Panc1 (cell line): ENCODE measurements at regions of chr1 and their contacts with region 1.

Region 1: DNA sequence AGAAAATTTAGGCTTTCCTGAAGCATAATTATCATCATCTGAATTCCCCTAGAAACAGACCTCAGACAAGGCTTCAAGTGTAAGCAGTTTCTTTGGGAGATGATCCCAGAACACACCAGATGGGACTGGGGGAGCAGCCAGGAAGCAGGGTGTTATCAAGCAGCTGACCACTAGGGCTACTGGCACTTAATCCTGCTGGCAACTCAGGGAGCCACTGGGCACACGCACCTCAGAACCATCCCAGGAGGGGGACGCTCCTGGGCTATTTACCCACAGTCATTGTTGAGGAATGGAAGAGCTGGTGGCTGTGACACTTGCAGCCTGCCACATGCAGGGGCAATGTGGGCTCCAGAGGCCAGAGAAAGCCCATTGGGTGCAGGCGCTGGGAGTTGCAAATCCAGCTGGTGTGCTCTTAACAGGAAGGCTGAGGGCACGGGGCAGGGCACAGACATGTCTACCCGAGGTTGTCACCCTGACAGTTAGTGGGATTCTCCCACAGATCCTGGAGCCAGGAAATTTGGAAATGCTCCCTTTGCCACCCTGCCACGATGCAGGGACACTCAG is 15.1 kb upstream of the IL22RA1 start:
- DNase-seq: no peak
- ATAC-seq: peak; percentile 73
- H3K4me3 ChIP-seq: no peak overlapping the region
- H3K27ac ChIP-seq: no peak overlapping the region
- H3K4me1 ChIP-seq: no peaks in the 10 kb centered on the region
- H3K27me3 ChIP-seq: no peaks in the 10 kb centered on the region
- CTCF ChIP-seq: peak; percentile 43; the same call in 1 of the 2 replicates

Region 2: DNA sequence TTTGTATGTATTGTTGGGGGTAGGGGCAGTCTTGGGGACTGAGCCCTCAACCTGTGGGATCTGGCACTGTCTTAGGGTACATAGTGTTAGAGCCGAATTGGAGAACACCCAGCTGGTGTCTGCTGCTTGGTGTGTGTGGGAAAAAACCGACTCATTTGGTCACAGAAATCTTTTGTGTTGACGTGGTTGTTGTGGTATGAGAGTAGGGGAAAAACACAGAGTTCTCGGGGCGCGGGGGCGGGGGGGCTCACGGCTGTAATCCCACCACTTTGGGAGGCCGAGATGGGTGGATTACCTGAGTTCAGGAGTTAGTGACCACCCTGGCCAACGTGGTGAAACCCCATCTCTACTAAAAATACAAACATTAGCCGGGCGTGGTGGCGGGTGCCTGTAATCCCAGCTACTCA is 162.6 kb before region 1 on chr1:
- CTCF ChIA-PET with region 1: interaction called, 10 read pairs
- POLR2A ChIA-PET with region 1: no interaction called
- in situ Hi-C with region 1: no loop called
- intact Hi-C with region 1: no loop called
- DNase-seq: no peak
- ATAC-seq: no peak
- H3K4me3 ChIP-seq: no peak overlapping the region
- H3K27ac ChIP-seq: no peak overlapping the region; the same call in 1 of the 2 replicates
- H3K4me1 ChIP-seq: peaks cover 3% of the 10 kb centered on the region; the same call in 1 of the 2 replicates
- H3K27me3 ChIP-seq: no peaks in the 10 kb centered on the region
- CTCF ChIP-seq: no peak

Region 3: DNA sequence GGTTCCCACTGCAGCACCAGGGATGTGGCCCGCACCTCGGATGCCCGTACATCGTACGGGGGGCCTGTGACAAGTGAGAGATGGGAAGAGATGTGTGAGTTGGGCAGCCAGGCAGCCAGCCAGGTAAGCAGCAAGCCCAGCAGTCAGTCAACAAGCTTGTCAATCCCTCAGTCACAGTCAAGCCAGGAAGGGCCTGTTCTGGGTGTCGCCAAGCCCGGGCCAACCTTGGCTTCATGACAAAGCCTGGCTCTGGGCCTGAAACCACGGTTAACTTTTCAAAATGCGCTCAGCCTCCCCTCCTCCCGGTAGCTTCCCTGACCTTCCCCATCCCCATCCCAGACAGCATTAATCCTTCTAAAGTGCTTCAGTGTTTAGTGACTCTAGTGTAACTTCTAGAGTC is 77.9 kb before region 1 on chr1:
- CTCF ChIA-PET with region 1: no interaction called
- POLR2A ChIA-PET with region 1: no interaction called
- in situ Hi-C with region 1: no loop called
- intact Hi-C with region 1: no loop called
- DNase-seq: no peak
- ATAC-seq: no peak
- H3K4me3 ChIP-seq: no peak overlapping the region
- H3K27ac ChIP-seq: no peak overlapping the region
- H3K4me1 ChIP-seq: no peaks in the 10 kb centered on the region
- H3K27me3 ChIP-seq: no peaks in the 10 kb centered on the region
- CTCF ChIP-seq: no peak

Region 4: DNA sequence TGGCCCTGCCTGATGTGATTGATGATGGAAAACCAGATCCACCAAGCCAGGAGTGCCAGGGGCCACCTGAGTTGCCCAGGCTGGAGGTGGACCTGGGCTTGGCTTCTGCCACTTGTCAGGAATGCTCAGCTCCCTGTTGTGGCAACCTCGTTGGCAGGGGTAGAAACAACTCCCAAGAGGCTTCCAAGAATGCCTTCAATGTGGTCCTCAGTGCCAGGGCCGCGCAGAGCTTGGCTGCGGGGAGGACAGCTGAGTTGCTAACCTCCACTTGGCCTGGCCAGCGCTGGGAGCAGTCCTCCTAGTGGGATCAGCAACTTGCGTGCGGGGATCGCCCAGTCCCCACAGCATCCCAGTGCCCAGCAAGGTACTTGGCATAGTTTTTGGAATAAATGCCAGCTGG is 55.0 kb before region 1 on chr1:
- CTCF ChIA-PET with region 1: no interaction called
- POLR2A ChIA-PET with region 1: no interaction called
- in situ Hi-C with region 1: no loop called
- intact Hi-C with region 1: no loop called
- DNase-seq: no peak
- ATAC-seq: no peak
- H3K4me3 ChIP-seq: no peak overlapping the region
- H3K27ac ChIP-seq: no peak overlapping the region
- H3K4me1 ChIP-seq: peaks cover 8% of the 10 kb centered on the region
- H3K27me3 ChIP-seq: no peaks in the 10 kb centered on the region
- CTCF ChIP-seq: no peak

Region 5: DNA sequence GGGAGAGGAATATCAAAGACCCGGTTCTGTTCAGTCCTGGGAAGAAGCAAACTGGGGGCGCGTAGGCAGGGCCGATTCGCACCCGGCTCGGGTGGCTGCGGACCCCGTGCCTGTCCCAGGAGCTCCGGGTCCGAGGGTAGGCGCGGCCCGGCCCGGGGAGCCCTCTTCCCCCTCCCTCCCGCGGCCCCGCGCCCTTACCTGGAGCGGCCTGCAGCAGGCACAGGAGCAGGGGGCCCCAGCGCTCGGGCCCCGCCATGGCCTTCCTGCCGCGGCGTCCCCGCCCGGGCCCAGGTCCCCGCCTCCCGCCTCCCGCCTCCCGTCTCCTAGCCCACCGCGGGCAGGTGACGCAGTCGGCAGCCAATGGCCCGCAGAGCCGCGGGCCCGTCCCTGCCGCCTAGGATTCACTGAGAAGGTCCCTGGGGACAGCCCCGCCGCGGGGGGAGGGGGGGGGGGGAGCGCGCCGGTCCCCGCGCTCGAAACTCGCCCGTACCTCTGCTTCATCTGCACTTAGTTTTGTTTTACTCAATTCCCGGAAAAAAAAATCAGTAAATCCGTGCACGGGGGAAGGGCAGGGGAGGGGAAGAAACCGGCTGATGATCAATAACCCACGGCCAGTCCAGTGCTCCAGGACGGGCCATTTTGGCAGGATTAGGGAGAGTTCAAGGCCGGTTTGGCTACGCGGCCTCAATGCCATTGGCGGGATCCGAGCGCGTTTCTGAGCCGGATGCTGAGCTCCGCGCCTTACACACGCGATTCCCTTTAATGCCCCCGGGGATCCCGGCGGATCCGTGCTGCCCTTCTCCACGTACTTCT is 29.2 kb after region 1 on chr1 and contains the start of gene IFNLR1:
- CTCF ChIA-PET with region 1: no interaction called
- POLR2A ChIA-PET with region 1: no interaction called
- in situ Hi-C with region 1: no loop called
- intact Hi-C with region 1: no loop called
- DNase-seq: no peak
- ATAC-seq: peak; percentile 66
- H3K4me3 ChIP-seq: peak within 1 kb of the TSS; percentile 53 to 69
- H3K27ac ChIP-seq: peak within 1 kb of the TSS; percentile 35; the same call in 1 of the 2 replicates
- H3K4me1 ChIP-seq: peaks cover 10% of the 10 kb centered on the region; the same call in 1 of the 2 replicates
- H3K27me3 ChIP-seq: no peaks in the 10 kb centered on the region
- CTCF ChIP-seq: no peak
- total RNA-seq, gene IFNLR1: 1.0 TPM